ENCODE measurements at regions of chr3 and their contacts with region 1.

Region 1: GRCh38 chr3:105678017-105678416 is 190.8 kb downstream of the CBLB start:
- DNase-seq: no peak
- ATAC-seq: no peak
- H3K4me3 ChIP-seq: no peak overlapping the region
- H3K27ac ChIP-seq: no peak overlapping the region
- H3K4me1 ChIP-seq: no peaks in the 10 kb centered on the region
- CTCF ChIP-seq: no peak
- EP300 ChIP-seq: no peak
- POLR2A ChIP-seq: no peak
- RAD21 ChIP-seq: no peak

Region 2: GRCh38 chr3:105647047-105647446 is 31.0 kb before region 1 on chr3:
- CTCF ChIA-PET with region 1: no interaction called
- POLR2A ChIA-PET with region 1: no interaction called
- DNase-seq: peak in 1 of 2 experiments; percentile 76
- ATAC-seq: peak; percentile 97 to 98
- H3K4me3 ChIP-seq: no peak overlapping the region
- H3K27ac ChIP-seq: peak overlapping the region; percentile 3 to 55; a peak in 2 of 6 replicates
- H3K4me1 ChIP-seq: peaks cover 20% of the 10 kb centered on the region
- CTCF ChIP-seq: no peak
- EP300 ChIP-seq: no peak
- POLR2A ChIP-seq: no peak
- RAD21 ChIP-seq: peak in 1 of 2 experiments; percentile 8; a peak in 1 of 5 replicates

Region 3: GRCh38 chr3:105899516-105899915 is 221.5 kb after region 1 on chr3:
- CTCF ChIA-PET with region 1: no interaction called
- POLR2A ChIA-PET with region 1: interaction called, 10 read pairs
- DNase-seq: peak in 1 of 2 experiments; percentile 25
- ATAC-seq: peak in 1 of 2 experiments; percentile 45; a peak in 1 of 6 replicates
- H3K4me3 ChIP-seq: no peak overlapping the region
- H3K27ac ChIP-seq: peak overlapping the region; percentile 11 to 76; a peak in 3 of 6 replicates
- H3K4me1 ChIP-seq: peaks cover 18% of the 10 kb centered on the region
- CTCF ChIP-seq: no peak
- EP300 ChIP-seq: no peak
- POLR2A ChIP-seq: no peak
- RAD21 ChIP-seq: no peak

Measured in A549 (cell line).